Astrocyte of the cerebellum (primary cell): ENCODE measurements at regions of chr14 and their contacts with region 1.

Region 1: GRCh38 chr14:95993768-95994592 is 45.2 kb upstream of the C14orf132 start:
- DNase-seq: peak; percentile 44
- H3K4me3 ChIP-seq: no peak overlapping the region
- CTCF ChIP-seq: peak; percentile 75

Region 2: DNA sequence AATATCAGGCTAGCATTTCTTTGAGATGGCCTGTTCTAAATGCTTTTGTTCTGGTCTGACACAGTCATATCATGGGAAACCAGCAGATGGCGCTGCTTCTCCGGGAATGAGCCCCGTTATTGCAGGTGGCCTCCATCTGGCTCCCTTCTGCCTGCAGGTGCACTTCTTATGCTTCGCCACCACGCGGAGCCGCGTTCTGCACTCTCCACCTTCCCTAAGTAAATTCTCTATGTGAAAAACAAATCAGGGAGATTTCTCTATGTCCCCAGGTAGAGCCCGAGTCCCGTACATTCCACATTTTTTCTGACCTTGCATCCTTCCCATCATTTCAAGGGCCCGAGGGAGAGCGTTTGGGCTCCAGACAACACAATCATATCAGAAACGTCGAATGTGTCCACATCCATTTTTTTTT is 433.0 kb before region 1 on chr14:
- in situ Hi-C with region 1: loop called (anchors 25 kb)
- DNase-seq: peak; percentile 85
- H3K4me3 ChIP-seq: no peak overlapping the region
- CTCF ChIP-seq: peak; percentile 97